GM12878 (cell line): ENCODE measurements at regions of chr3 and their contacts with region 1.

Region 1: GRCh38 chr3:195154793-195155535 is 116.0 kb downstream of the XXYLT1 start:
- DNase-seq: no peak
- ATAC-seq: peak; percentile 7; the same call in 1 of the 3 replicates
- H3K4me3 ChIP-seq: 0 out of 2 replicates have a peak overlapping the region, but pooled peaks have one; percentile 12
- H3K27ac ChIP-seq: peak overlapping the region; percentile 73
- H3K4me1 ChIP-seq: peaks cover 44% of the 10 kb centered on the region
- H3K27me3 ChIP-seq: no peaks in the 10 kb centered on the region
- CTCF ChIP-seq: no peak
- EP300 ChIP-seq: no peak
- POLR2A ChIP-seq: peak; percentile 54
- RAD21 ChIP-seq: peak; percentile 8; the same call in 1 of the 2 replicates

Region 2: DNA sequence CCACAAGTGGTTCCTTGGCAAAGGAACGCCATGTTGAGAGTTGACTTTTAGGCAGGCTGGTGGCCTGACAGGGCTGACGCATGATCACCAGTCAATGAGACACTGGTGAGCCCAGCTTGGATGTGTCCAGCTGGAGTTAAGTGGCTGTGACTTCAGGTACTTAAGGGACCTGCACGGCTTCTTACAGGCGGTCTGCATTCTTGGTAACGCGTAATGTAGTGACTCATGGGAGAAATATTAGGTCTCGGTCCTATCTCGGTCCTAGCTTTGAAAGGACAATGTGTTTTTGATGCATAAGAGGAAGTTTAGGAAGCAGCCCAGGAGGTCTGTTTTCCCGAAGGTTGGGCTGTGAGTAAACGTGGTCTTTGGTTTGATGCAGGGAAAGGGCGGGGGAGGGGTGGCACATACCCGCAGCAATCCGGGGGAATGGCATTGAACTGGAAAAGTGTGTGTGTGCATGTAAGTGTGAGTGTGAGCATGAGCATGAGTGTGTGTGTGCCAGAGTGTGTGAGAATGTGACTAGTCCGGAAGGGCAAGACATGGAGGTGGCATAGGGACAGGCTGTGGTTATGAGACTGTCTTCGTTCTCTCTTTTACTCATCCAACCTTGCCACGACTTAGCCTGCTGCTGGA is 414.0 kb before region 1 on chr3:
- CTCF ChIA-PET with region 1: no interaction called
- POLR2A ChIA-PET with region 1: no interaction called
- RAD21 ChIA-PET with region 1: no interaction called
- SMC1A ChIA-PET with region 1: no interaction called
- in situ Hi-C with region 1: no loop called
- intact Hi-C with region 1: no loop called
- DNase-seq: no peak
- ATAC-seq: no peak
- H3K4me3 ChIP-seq: no peak overlapping the region
- H3K27ac ChIP-seq: no peak overlapping the region
- H3K4me1 ChIP-seq: peaks cover 14% of the 10 kb centered on the region
- H3K27me3 ChIP-seq: peaks cover 0 to 3% of the 10 kb centered on the region in 2 experiments; a peak in 2 of 4 replicates
- CTCF ChIP-seq: no peak
- EP300 ChIP-seq: no peak
- POLR2A ChIP-seq: no peak
- RAD21 ChIP-seq: no peak

Region 3: DNA sequence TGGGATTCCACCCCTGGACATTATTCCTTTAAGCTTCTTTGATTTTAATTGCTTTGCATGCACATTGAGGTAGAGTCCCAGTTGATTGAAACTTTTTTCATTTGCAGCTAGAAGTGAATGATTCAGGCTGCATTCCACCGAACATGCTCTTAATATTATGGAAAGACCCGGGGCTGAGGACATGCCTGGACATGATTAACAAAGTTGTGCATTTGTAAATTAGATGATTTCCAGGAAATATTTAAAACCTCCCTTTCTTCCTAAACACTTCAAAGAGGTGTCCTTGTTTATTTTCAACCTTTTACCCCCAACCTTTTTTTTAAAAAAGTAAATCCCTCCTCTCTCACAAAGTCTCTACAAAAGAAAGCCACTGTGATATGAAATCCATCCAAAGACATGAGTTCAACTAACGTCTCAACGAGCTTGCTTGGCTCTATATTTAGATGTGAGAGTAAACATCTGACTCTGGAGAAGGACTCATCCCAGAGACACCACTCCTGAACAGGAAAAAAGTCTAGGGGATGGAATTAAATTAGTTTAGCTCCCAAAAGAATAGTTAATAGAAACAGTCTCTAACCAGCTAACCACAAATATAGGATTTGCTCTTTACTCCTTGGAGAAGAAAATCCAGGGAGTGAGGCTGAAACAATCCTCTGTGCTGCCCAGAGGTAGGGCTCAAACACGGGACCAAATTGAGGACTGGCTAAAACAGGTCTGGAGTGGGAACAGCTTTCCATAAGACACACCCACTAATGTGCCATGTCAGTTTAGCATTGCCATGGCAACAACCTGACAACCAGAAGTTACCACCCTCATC is 32.9 kb after region 1 on chr3:
- CTCF ChIA-PET with region 1: no interaction called
- POLR2A ChIA-PET with region 1: interaction called, 9 read pairs
- RAD21 ChIA-PET with region 1: interaction called, 3 read pairs
- SMC1A ChIA-PET with region 1: interaction called, 15 read pairs
- in situ Hi-C with region 1: no loop called
- intact Hi-C with region 1: no loop called
- DNase-seq: no peak
- ATAC-seq: no peak
- H3K4me3 ChIP-seq: no peak overlapping the region
- H3K27ac ChIP-seq: no peak overlapping the region
- H3K4me1 ChIP-seq: peaks cover 6% of the 10 kb centered on the region
- H3K27me3 ChIP-seq: no peaks in the 10 kb centered on the region
- CTCF ChIP-seq: no peak
- EP300 ChIP-seq: no peak
- POLR2A ChIP-seq: no peak
- RAD21 ChIP-seq: no peak

Region 4: DNA sequence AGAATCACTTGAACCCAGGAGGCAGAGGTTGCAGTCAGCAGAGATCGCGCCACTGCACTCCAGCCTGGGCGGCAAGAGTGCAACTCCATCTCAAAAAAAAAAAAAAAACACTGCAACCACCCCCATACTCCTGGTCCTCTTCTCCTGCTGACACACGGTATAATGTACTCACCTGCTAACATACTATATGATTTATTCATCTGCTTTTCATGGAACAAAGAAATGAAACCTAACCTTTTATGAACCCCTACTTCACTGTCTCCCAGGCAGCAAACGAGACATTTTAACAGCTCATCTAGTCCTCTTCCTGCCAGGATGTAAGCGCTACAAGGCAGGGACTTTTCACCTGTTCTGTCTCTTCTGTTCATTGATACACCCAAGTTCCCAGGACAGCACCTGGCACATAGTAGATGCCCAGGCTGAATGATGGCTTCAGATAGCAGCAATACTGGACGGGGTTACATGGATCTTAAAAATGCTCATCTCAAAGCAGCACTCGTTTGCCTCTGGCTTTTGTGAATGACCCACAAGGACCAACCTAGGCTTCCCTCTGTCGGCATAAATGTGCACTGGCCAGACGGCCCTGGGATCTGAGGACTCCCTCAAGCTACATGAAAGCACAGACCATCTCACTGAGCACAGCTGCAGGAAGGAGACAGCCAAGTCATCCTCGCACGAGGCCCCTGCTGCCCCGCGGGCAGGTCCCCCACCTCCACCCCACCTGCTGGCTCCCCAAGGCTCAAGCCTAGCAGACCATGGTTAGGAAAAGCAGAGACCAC is 95.7 kb after region 1 on chr3:
- CTCF ChIA-PET with region 1: interaction called, 3 read pairs
- POLR2A ChIA-PET with region 1: interaction called, 12 read pairs
- RAD21 ChIA-PET with region 1: interaction called, 15 read pairs
- SMC1A ChIA-PET with region 1: interaction called, 17 read pairs
- in situ Hi-C with region 1: no loop called
- intact Hi-C with region 1: no loop called
- DNase-seq: no peak
- ATAC-seq: peak; percentile 76
- H3K4me3 ChIP-seq: no peak overlapping the region
- H3K27ac ChIP-seq: peak overlapping the region; percentile 23
- H3K4me1 ChIP-seq: peaks cover 25% of the 10 kb centered on the region
- H3K27me3 ChIP-seq: no peaks in the 10 kb centered on the region
- CTCF ChIP-seq: peak; percentile 39 to 60 (median 42); a peak in 5 of 6 replicates
- EP300 ChIP-seq: no peak
- POLR2A ChIP-seq: no peak
- RAD21 ChIP-seq: peak; percentile 55